Aorta (tissue), 5 donors: ENCODE measurements at regions of chr9 and their contacts with region 1.

Region 1: DNA sequence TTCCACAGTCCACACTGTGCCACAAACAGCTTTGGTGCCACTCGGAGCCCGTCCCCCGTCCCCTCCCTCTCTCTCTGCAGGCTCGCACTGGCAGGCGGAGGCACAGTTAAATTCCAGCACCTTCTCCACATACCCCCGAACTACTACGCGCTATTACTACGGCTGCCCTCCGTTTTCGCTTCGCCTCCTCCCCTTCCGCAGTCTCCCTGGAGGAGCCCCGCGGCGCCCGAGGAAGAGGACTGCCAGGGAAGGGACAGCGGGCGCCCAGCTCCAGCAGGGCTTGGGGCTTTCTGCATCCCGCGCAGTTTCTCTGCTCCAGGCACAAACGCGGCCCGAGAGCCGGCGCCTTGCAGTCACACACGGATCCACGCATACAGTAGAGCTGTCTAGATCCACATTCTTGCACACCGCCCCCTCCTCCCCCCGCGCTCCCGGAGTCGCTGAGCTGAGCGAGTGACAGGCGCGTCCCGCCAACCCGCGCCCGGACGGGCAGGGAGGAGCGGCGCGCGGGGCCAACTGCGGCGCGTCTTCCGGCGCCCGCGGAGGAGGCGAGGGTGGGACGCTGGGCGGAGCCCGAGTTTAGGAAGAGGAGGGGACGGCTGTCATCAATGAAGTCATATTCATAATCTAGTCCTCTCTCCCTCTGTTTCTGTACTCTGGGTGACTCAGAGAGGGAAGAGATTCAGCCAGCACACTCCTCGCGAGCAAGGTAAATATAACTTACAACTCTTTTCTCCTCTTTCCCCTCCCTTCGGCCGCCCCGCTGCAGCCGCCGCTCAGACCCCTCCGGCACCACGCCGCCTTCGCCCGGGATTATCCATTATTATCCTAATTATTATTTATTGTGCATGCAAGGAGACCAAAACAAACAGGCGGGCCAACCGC is at the start of gene SMARCA2:
- DNase-seq: peak; percentile 99
- ATAC-seq: peak; percentile 93
- H3K4me3 ChIP-seq: peak within 1 kb of the TSS; percentile 85 to 95
- H3K27ac ChIP-seq: peak within 1 kb of the TSS; percentile 79 to 93
- H3K4me1 ChIP-seq: peaks cover 0 to 3% of the 10 kb centered on the region in 2 donors
- H3K27me3 ChIP-seq: no peaks in the 10 kb centered on the region
- total RNA-seq, gene SMARCA2: 206 to 265 TPM

Region 2: GRCh38 chr9:2053883-2054845 is 39.2 kb after region 1 on chr9:
- intact Hi-C with region 1: loop called (anchors 5 kb)
- DNase-seq: peak in 1 of 2 donors; percentile 66
- ATAC-seq: peak; percentile 57
- H3K4me3 ChIP-seq: peak overlapping the region in 1 of 2 donors; percentile 10
- H3K27ac ChIP-seq: peak overlapping the region; percentile 28 to 36
- H3K4me1 ChIP-seq: no peaks in the 10 kb centered on the region
- H3K27me3 ChIP-seq: no peaks in the 10 kb centered on the region

Region 3: GRCh38 chr9:2125906-2126305 is 111.0 kb after region 1 on chr9:
- intact Hi-C with region 1: loop called in 1 of 2 experiments (anchors 5 kb)
- DNase-seq: no peak
- ATAC-seq: no peak
- H3K4me3 ChIP-seq: no peak overlapping the region
- H3K27ac ChIP-seq: peak overlapping the region in 1 of 2 donors; percentile 98
- H3K4me1 ChIP-seq: peaks cover 11 to 17% of the 10 kb centered on the region in 2 donors
- H3K27me3 ChIP-seq: no peaks in the 10 kb centered on the region

Region 4: GRCh38 chr9:2809691-2810433 is 794.9 kb after region 1 on chr9:
- intact Hi-C with region 1: loop called (anchors 10 kb)
- DNase-seq: no peak
- ATAC-seq: peak; percentile 80
- H3K4me3 ChIP-seq: peak overlapping the region in 1 of 2 donors; percentile 34
- H3K27ac ChIP-seq: peak overlapping the region; percentile 75 to 99
- H3K4me1 ChIP-seq: peaks cover 7 to 8% of the 10 kb centered on the region in 2 donors
- H3K27me3 ChIP-seq: no peaks in the 10 kb centered on the region

Region 5: GRCh38 chr9:2849941-2850340 is 835.0 kb after region 1 on chr9:
- intact Hi-C with region 1: loop called in 1 of 2 experiments (anchors 2 kb)
- DNase-seq: no peak
- ATAC-seq: no peak
- H3K4me3 ChIP-seq: no peak overlapping the region
- H3K27ac ChIP-seq: no peak overlapping the region
- H3K4me1 ChIP-seq: peaks cover 0 to 2% of the 10 kb centered on the region in 2 donors
- H3K27me3 ChIP-seq: no peaks in the 10 kb centered on the region